ENCODE measurements at regions of chr22 and their contacts with region 1.

Region 1: DNA sequence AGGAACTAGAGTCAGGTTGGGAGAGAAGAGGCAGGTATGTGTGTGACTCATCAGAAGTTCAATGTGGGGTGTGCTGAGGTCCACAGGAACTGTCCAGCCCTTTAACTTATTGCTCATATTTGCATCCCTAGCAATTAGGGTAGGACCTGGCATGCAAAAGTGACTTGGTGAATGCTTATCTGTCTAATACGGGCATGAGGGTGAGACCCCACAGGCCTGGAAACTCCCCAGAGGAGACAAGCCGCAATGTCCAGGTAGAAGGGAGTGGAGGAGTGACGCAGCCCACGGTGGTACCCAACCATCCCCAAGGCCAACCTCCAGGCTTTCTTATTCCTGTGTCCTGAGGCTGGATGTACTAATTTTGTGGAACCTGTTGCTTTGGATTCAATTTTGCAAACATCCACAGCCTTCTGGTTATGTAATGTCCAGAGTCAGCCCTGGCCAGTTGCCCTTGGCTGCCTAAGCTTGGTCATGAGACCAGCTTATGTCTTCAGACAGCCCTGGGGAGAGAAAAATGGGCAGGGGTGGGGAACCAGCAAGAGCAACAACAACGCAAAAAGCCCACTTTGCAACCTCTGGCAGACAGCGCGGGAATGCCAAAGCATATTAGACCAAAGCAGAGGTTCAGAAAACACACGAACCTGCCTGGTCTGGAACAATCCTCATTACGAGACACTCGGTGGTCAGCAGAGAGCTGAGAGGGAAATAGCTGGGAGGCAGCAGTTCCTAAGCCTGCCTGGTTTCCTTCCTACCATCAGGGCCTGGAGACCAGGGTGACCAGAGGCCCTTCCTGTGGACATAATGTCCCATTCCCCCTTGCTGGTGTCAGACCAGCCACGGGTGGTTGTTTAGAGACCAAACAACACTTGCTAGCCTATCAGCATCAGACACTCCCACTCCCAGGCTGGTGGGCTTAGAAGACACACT is 49.3 kb downstream of the TIMP3 start:
- DNase-seq: peak; percentile 80
- ATAC-seq: peak; percentile 50 to 54

Region 2: DNA sequence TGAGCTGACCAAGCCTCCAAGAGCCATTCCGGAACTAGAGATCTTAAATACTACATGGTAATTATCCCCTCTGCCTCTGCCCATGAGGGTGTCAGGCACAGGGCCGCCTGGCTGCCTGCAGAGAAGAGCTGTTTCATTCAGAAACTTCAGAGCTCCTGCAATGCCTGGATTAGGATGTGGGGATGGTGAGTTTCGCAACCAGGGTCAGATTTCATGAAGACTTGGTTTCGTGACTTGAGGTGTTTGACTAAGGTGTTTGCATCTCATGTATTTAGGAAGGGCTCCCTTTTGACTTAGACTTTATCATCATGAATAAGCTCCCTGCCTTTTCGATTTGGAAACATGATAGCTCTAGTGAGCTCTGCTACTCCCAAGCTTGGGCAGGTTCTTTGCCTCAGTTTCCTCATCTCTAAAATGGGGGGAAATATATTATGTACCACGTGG is 40.3 kb before region 1 on chr22:
- intact Hi-C with region 1: loop called in 1 of 2 experiments (anchors 5 kb)
- DNase-seq: no peak
- ATAC-seq: no peak

Region 3: GRCh38 chr22:32951076-32951806 is 100.4 kb after region 1 on chr22:
- intact Hi-C with region 1: loop called in 1 of 2 experiments (anchors 10 kb)
- DNase-seq: no peak
- ATAC-seq: peak; percentile 17 to 19

Region 4: DNA sequence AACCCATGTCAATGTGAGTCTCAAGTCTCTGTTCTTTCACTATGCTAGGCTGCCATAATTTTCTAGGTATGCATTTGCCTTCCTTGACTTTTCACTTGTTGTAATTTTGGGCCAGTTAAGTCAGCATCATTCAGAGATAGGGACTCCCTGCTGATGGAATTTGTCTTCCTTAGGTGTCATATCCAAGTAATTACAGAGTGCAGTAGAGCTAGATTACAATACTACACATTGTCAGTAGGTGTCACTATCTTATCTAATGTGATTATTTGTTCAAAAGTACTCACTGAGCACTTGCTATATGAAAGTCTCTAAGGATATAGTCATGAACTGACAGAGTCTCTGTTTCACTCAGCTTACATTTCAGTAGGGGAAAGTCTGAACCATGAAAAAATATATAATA is 232.4 kb after region 1 on chr22:
- intact Hi-C with region 1: no loop called
- DNase-seq: no peak
- ATAC-seq: no peak